GM12878 (cell line): ENCODE measurements at regions of chr1 and their contacts with region 1.

Region 1: GRCh38 chr1:177780096-177780700 is 189.7 kb downstream of the SEC16B start:
- DNase-seq: no peak
- ATAC-seq: peak; percentile 81
- H3K4me3 ChIP-seq: no peak overlapping the region
- H3K27ac ChIP-seq: no peak overlapping the region
- H3K4me1 ChIP-seq: no peaks in the 10 kb centered on the region
- H3K27me3 ChIP-seq: no peaks in the 10 kb centered on the region
- CTCF ChIP-seq: peak; percentile 31 to 50 (median 34); a peak in 4 of 6 replicates
- EP300 ChIP-seq: no peak
- POLR2A ChIP-seq: no peak
- RAD21 ChIP-seq: peak; percentile 57

Region 2: DNA sequence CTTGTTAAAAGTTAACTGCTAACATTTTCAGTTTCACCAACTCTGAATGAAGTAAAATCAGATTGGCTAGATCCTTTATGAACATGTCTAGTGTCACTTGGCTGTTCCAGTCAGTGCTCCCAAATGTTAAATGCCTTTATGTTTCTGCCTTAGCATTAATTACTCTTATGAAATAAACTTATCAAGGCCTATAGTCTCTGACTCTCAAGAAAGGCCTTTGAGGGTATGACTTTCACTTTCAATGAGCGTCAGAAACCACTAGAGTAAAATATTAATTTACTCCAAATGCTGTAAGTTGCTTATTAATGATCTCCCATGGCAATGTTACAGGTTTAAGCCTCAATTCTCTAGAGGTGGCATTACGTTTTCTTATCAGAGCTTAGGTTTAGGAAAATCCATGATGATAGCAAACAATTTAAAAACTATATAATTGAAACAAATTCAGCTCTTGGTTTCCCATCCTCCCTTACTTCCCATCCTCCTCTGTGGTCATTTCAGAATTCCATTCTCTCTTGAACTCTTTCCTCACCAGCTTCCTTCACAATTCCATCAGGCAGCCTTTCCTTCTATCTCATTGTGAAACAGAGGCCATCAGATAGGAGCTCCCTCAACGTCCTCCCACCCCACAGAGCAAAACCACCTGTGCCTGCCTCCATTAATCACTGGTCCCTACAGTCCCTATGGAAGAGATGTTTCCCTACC is 1464.5 kb before region 1 on chr1:
- CTCF ChIA-PET with region 1: no interaction called
- POLR2A ChIA-PET with region 1: no interaction called
- RAD21 ChIA-PET with region 1: no interaction called
- SMC1A ChIA-PET with region 1: no interaction called
- in situ Hi-C with region 1: no loop called
- intact Hi-C with region 1: no loop called
- DNase-seq: peak; percentile 21
- ATAC-seq: peak; percentile 83
- H3K4me3 ChIP-seq: no peak overlapping the region
- H3K27ac ChIP-seq: no peak overlapping the region
- H3K4me1 ChIP-seq: no peaks in the 10 kb centered on the region
- H3K27me3 ChIP-seq: no peaks in the 10 kb centered on the region
- CTCF ChIP-seq: no peak
- EP300 ChIP-seq: no peak
- POLR2A ChIP-seq: no peak
- RAD21 ChIP-seq: no peak

Region 3: GRCh38 chr1:177256153-177257075 is 523.8 kb before region 1 on chr1:
- CTCF ChIA-PET with region 1: interaction called, 35 read pairs
- POLR2A ChIA-PET with region 1: no interaction called
- RAD21 ChIA-PET with region 1: interaction called, 16 read pairs
- SMC1A ChIA-PET with region 1: interaction called, 21 read pairs
- in situ Hi-C with region 1: no loop called
- intact Hi-C with region 1: loop called (anchors 2 kb)
- DNase-seq: no peak
- ATAC-seq: peak; percentile 84
- H3K4me3 ChIP-seq: no peak overlapping the region
- H3K27ac ChIP-seq: no peak overlapping the region
- H3K4me1 ChIP-seq: no peaks in the 10 kb centered on the region
- H3K27me3 ChIP-seq: no peaks in the 10 kb centered on the region
- CTCF ChIP-seq: peak; percentile 40 to 55 (median 41); a peak in 5 of 6 replicates
- EP300 ChIP-seq: no peak
- POLR2A ChIP-seq: no peak
- RAD21 ChIP-seq: peak; percentile 42

Region 4: DNA sequence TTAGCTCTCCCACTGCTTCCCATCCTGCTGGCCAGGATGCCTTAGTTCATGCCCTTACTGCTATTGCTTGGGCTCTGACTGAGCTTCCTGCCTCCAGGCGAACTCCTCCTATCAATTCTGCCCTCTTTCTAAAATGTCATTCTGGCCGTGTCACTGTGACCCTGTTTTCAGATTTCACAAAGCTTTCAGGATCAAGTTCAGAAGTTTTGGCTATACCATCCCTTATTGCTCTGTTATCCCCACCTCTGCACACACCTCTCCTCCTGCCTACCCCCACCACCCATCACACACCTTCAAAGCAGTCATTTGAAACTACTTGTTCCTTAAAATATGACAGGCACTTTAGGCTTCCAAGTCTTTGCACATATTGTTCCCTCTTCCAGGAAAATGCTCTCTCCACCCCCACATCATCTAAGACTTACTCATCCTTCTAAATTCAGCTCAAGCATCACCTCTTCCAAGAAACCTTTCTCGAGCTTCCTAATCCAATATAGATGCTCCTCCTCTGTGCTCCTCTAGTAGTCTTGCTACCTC is 331.4 kb before region 1 on chr1:
- CTCF ChIA-PET with region 1: interaction called, 13 read pairs
- POLR2A ChIA-PET with region 1: no interaction called
- RAD21 ChIA-PET with region 1: interaction called, 8 read pairs
- SMC1A ChIA-PET with region 1: interaction called, 3 read pairs
- in situ Hi-C with region 1: no loop called
- intact Hi-C with region 1: no loop called
- DNase-seq: no peak
- ATAC-seq: no peak
- H3K4me3 ChIP-seq: no peak overlapping the region
- H3K27ac ChIP-seq: no peak overlapping the region
- H3K4me1 ChIP-seq: no peaks in the 10 kb centered on the region
- H3K27me3 ChIP-seq: no peaks in the 10 kb centered on the region
- CTCF ChIP-seq: no peak
- EP300 ChIP-seq: no peak
- POLR2A ChIP-seq: no peak
- RAD21 ChIP-seq: no peak

Region 5: GRCh38 chr1:177794376-177794991 is 14.3 kb after region 1 on chr1:
- CTCF ChIA-PET with region 1: interaction called, 27 read pairs
- POLR2A ChIA-PET with region 1: interaction called, 3 read pairs
- RAD21 ChIA-PET with region 1: interaction called, 14 read pairs
- SMC1A ChIA-PET with region 1: interaction called, 24 read pairs
- in situ Hi-C with region 1: no loop called
- intact Hi-C with region 1: no loop called
- DNase-seq: no peak
- ATAC-seq: no peak
- H3K4me3 ChIP-seq: no peak overlapping the region
- H3K27ac ChIP-seq: no peak overlapping the region
- H3K4me1 ChIP-seq: no peaks in the 10 kb centered on the region
- H3K27me3 ChIP-seq: no peaks in the 10 kb centered on the region
- CTCF ChIP-seq: no peak
- EP300 ChIP-seq: no peak
- POLR2A ChIP-seq: no peak
- RAD21 ChIP-seq: no peak

Region 6: GRCh38 chr1:177948336-177948972 is 168.3 kb after region 1 on chr1:
- CTCF ChIA-PET with region 1: interaction called, 16 read pairs
- POLR2A ChIA-PET with region 1: no interaction called
- RAD21 ChIA-PET with region 1: interaction called, 11 read pairs
- SMC1A ChIA-PET with region 1: interaction called, 5 read pairs
- in situ Hi-C with region 1: no loop called
- intact Hi-C with region 1: no loop called
- DNase-seq: no peak
- ATAC-seq: peak; percentile 87
- H3K4me3 ChIP-seq: no peak overlapping the region
- H3K27ac ChIP-seq: no peak overlapping the region
- H3K4me1 ChIP-seq: no peaks in the 10 kb centered on the region
- H3K27me3 ChIP-seq: no peaks in the 10 kb centered on the region; a peak in 1 of 4 replicates
- CTCF ChIP-seq: peak; percentile 80 to 88 (median 87)
- EP300 ChIP-seq: no peak
- POLR2A ChIP-seq: no peak
- RAD21 ChIP-seq: peak; percentile 66